H1 (cell line): ENCODE measurements at regions of chr11 and their contacts with region 1.

Region 1: GRCh38 chr11:124644426-124645280 is 22.0 kb downstream of the TBRG1 start:
- DNase-seq: peak in 1 of 2 experiments; percentile 68
- H3K4me3 ChIP-seq: peak overlapping the region in 1 of 4 experiments; percentile 37; a peak in 2 of 8 replicates
- H3K27ac ChIP-seq: no peak overlapping the region
- H3K4me1 ChIP-seq: peaks cover 0 to 4% (median 2%) of the 10 kb centered on the region in 4 experiments; a peak in 3 of 7 replicates
- H3K27me3 ChIP-seq: no peaks in the 10 kb centered on the region
- CTCF ChIP-seq: peak; percentile 38 to 87 (median 75)
- EP300 ChIP-seq: no peak
- POLR2A ChIP-seq: no peak
- RAD21 ChIP-seq: peak; percentile 85

Region 2: GRCh38 chr11:124633355-124633754 is 11.3 kb before region 1 on chr11:
- CTCF ChIA-PET with region 1: interaction called, 25 read pairs
- POLR2A ChIA-PET with region 1: interaction called, 4 read pairs
- DNase-seq: no peak
- H3K4me3 ChIP-seq: no peak overlapping the region
- H3K27ac ChIP-seq: no peak overlapping the region
- H3K4me1 ChIP-seq: 0 out of 7 replicates have a peak, but pooled peaks cover 0 to 1% (median 0%) of the 10 kb centered on the region in 4 experiments
- H3K27me3 ChIP-seq: no peaks in the 10 kb centered on the region
- CTCF ChIP-seq: peak in 2 of 3 experiments; percentile 6 to 18; a peak in 2 of 4 replicates
- EP300 ChIP-seq: no peak
- POLR2A ChIP-seq: no peak
- RAD21 ChIP-seq: peak in 1 of 2 experiments; percentile 9; a peak in 1 of 4 replicates

Region 3: GRCh38 chr11:124656774-124657630 is 12.3 kb after region 1 on chr11:
- CTCF ChIA-PET with region 1: interaction called, 16 read pairs
- POLR2A ChIA-PET with region 1: no interaction called
- DNase-seq: peak in 1 of 2 experiments; percentile 52
- H3K4me3 ChIP-seq: peak overlapping the region in 1 of 4 experiments; percentile 32; a peak in 2 of 8 replicates
- H3K27ac ChIP-seq: no peak overlapping the region
- H3K4me1 ChIP-seq: peaks cover 0 to 10% (median 7%) of the 10 kb centered on the region in 4 experiments; a peak in 4 of 7 replicates
- H3K27me3 ChIP-seq: no peaks in the 10 kb centered on the region; a peak in 2 of 7 replicates
- CTCF ChIP-seq: no peak
- EP300 ChIP-seq: no peak
- POLR2A ChIP-seq: no peak
- RAD21 ChIP-seq: no peak

Region 4: GRCh38 chr11:124662106-124662505 is 17.5 kb after region 1 on chr11:
- CTCF ChIA-PET with region 1: interaction called, 16 read pairs
- POLR2A ChIA-PET with region 1: interaction called, 6 read pairs
- DNase-seq: no peak
- H3K4me3 ChIP-seq: no peak overlapping the region
- H3K27ac ChIP-seq: no peak overlapping the region
- H3K4me1 ChIP-seq: peaks cover 0 to 7% (median 4%) of the 10 kb centered on the region in 4 experiments; a peak in 4 of 7 replicates
- H3K27me3 ChIP-seq: no peaks in the 10 kb centered on the region; a peak in 2 of 7 replicates
- CTCF ChIP-seq: no peak
- EP300 ChIP-seq: no peak
- POLR2A ChIP-seq: no peak
- RAD21 ChIP-seq: no peak

Region 5: GRCh38 chr11:124804884-124805283 is 160.2 kb after region 1 on chr11:
- CTCF ChIA-PET with region 1: no interaction called
- POLR2A ChIA-PET with region 1: no interaction called
- DNase-seq: no peak
- H3K4me3 ChIP-seq: no peak overlapping the region
- H3K27ac ChIP-seq: no peak overlapping the region
- H3K4me1 ChIP-seq: peaks cover 0 to 3% (median under 1%) of the 10 kb centered on the region in 4 experiments; a peak in 1 of 7 replicates
- H3K27me3 ChIP-seq: no peaks in the 10 kb centered on the region
- CTCF ChIP-seq: no peak
- EP300 ChIP-seq: no peak
- POLR2A ChIP-seq: no peak
- RAD21 ChIP-seq: no peak